ENCODE measurements at regions of chr18 and their contacts with region 1.

Region 1: DNA sequence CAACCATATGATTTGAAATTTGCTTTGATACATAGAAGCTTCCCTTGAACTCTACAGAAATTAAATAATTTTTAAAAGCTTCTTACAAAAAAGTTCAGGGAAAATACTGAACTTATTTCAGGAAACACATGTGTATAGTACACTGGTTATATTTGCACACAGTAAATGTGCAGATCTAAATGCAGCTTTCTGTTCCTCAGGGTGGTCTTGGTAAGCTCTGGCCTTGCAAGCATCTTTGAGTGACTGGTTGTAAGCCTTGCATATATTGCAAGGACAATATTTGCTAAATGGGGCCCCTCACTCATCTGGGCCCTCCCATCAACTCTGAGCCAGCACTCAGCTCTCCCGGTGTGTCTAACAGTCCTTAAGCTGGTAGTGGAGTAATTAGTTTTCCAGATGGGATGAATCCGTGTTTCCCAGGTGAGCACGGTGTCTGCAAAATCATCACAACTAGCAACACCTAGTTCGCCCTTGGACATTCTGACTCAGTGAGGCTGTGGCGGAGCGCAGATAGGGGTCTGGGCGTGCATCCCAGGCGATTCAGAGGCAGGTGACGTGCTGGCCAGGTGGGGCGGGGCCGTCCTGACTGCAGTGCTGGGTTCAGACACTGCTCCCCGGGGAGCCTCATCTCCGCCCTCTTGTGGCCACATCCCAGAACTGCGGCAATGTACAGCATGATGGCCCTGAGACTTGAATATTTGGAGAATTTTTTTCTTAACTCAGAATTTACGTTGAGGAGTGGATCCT is 149.6 kb downstream of the MBP start:
- DNase-seq: peak; percentile 80
- H3K4me3 Mint-ChIP-seq: no peak overlapping the region
- H3K27ac Mint-ChIP-seq: no peak overlapping the region
- H3K4me1 Mint-ChIP-seq: peaks cover 4% of the 10 kb centered on the region
- H3K27me3 Mint-ChIP-seq: no peaks in the 10 kb centered on the region

Region 2: GRCh38 chr18:76875390-76876325 is 107.4 kb before region 1 on chr18:
- intact Hi-C with region 1: loop called (anchors 1 kb)
- DNase-seq: peak; percentile 22
- H3K4me3 Mint-ChIP-seq: no peak overlapping the region
- H3K27ac Mint-ChIP-seq: peak overlapping the region; percentile 85
- H3K4me1 Mint-ChIP-seq: peaks cover 14% of the 10 kb centered on the region
- H3K27me3 Mint-ChIP-seq: no peaks in the 10 kb centered on the region

Region 3: GRCh38 chr18:76922107-76922506 is 60.9 kb before region 1 on chr18:
- intact Hi-C with region 1: loop called (anchors 1 kb)
- DNase-seq: peak; percentile 53
- H3K4me3 Mint-ChIP-seq: no peak overlapping the region
- H3K27ac Mint-ChIP-seq: no peak overlapping the region
- H3K4me1 Mint-ChIP-seq: peaks cover 21% of the 10 kb centered on the region
- H3K27me3 Mint-ChIP-seq: no peaks in the 10 kb centered on the region

Region 4: GRCh38 chr18:76963936-76964335 is 19.1 kb before region 1 on chr18:
- intact Hi-C with region 1: no loop called
- DNase-seq: no peak
- H3K4me3 Mint-ChIP-seq: peak overlapping the region; percentile 0
- H3K27ac Mint-ChIP-seq: peak overlapping the region; percentile 34
- H3K4me1 Mint-ChIP-seq: peaks cover 29% of the 10 kb centered on the region
- H3K27me3 Mint-ChIP-seq: no peaks in the 10 kb centered on the region

Region 5: GRCh38 chr18:77087393-77088141 is 104.6 kb after region 1 on chr18:
- intact Hi-C with region 1: no loop called
- DNase-seq: no peak
- H3K4me3 Mint-ChIP-seq: no peak overlapping the region
- H3K27ac Mint-ChIP-seq: no peak overlapping the region
- H3K4me1 Mint-ChIP-seq: peaks cover 45% of the 10 kb centered on the region
- H3K27me3 Mint-ChIP-seq: no peaks in the 10 kb centered on the region